Activated T-helper 1 cell treated with anti-CD3 and anti-CD28 coated beads, Interleukin-12 subunit alpha, Interleukin-12 subunit beta, Interleukin-2, Interleukin-4 antibody, amounts not matched to agents 30 ng/mL and 10 ng/mL and 1 ng/mL, durations not matched to agents 14 hours and 24 hours and 36 hours (primary cell): ENCODE measurements at regions of chr4 and their contacts with region 1.

Region 1: DNA sequence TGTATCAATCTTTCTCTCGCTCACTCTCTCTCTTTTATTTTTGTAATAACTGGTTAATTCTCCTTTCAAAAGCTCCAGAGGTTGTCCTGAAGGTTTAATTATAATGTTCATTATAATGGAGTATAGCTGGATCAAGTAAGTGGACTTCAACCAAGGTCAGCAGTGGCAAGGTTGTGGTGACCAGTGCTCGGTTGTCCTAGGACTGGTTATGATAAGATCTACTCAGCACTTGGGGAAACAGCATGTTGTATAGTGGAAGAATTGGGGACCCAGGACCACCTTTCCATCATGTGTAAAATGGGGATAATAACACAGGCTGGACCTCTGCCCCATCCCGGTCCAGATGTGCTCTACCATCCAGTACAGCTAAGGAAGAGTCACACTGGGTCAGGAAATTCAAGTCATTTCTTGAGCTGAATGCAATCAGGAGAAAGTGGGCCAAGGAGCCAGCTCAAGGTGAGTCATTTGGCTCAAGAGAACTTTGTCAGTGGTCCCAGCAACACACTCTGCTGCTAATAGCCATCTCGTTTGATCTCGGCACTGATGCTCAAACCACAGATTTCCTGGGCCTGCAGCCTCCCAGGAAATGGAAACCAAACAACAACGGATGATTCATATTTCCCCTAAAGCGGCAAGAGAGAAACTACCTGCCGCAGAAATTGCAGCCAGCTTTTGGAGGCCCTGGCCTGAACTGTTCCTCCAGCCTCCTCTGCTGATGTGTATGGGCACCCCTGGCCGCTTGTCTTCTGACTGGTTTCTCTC is 123.6 kb upstream of the RBPJ start:
- DNase-seq: peak; percentile 77
- H3K4me3 Mint-ChIP-seq: peak overlapping the region; percentile 71
- H3K27ac Mint-ChIP-seq: peak overlapping the region; percentile 95
- H3K4me1 Mint-ChIP-seq: peaks cover 93% of the 10 kb centered on the region
- H3K27me3 Mint-ChIP-seq: no peaks in the 10 kb centered on the region

Region 2: DNA sequence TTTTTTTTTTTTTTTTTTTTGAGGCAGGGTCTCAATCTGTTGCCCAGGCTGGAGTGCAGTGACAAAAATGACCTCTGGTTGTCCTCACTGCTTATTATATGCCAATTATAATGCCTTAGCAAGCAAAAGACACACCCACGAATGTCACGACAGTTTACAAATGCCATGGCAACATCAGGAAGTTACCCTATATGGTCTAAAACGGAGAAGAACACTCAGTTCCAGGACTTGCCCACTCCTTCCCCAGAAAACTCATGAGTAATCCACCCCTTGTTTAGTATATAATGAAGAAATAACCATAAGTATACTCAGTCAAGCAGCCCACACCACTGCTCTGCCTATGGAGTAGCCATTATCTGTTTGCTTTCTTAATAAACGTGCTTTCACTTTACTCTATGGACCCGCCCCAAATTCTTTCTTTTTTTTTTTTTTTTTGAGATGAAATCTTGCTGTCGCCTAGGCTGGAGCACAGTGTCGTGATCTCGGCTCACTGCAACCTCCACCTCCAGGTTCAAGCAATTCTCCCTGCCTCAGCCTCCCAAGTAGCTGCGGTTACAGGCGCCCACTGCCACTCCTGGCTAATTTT is 177.0 kb before region 1 on chr4:
- intact Hi-C with region 1: loop called (anchors 2 kb)
- DNase-seq: no peak
- H3K4me3 Mint-ChIP-seq: no peak overlapping the region
- H3K27ac Mint-ChIP-seq: peak overlapping the region; percentile 18
- H3K4me1 Mint-ChIP-seq: peaks cover 21% of the 10 kb centered on the region
- H3K27me3 Mint-ChIP-seq: peaks cover 9% of the 10 kb centered on the region

Region 3: DNA sequence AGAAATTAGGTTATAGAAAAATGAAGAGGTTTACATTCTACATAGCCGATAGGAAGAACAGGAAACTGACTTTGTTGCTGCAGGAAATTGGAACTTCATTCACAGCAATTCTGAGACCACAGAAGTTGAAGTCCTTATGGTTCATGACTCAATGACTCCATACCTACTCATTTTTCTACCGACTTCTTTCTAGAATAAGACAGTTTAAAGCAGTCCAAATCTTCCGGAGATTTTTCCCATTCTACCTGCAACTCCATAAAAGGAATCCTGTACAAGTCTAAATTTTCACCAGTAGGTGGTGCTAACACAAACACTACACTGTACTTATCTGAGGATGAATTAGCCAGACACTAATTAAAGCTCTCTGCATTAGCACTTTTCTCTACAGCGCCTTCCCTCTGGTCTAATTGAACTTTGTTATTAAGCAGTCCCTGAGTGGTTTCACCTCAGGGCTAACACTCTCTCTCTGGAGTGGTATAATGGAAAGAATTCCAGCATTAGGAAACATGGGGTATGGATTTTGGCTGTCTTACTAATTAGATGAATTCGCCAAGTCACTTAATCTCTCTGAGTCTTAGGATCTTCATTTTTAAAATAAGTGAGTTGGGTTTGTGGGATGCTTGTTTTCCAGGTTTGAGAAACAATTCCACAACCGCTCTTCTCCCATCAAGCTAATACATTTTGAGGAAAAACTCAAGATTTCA is 115.3 kb before region 1 on chr4:
- intact Hi-C with region 1: loop called (anchors 1 kb)
- DNase-seq: no peak
- H3K4me3 Mint-ChIP-seq: peak overlapping the region; percentile 48
- H3K27ac Mint-ChIP-seq: peak overlapping the region; percentile 81
- H3K4me1 Mint-ChIP-seq: peaks cover 83% of the 10 kb centered on the region
- H3K27me3 Mint-ChIP-seq: no peaks in the 10 kb centered on the region

Region 4: GRCh38 chr4:26141911-26142638 is 55.1 kb before region 1 on chr4:
- intact Hi-C with region 1: loop called (anchors 1 kb)
- DNase-seq: no peak
- H3K4me3 Mint-ChIP-seq: peak overlapping the region; percentile 3
- H3K27ac Mint-ChIP-seq: peak overlapping the region; percentile 78
- H3K4me1 Mint-ChIP-seq: peaks cover 67% of the 10 kb centered on the region
- H3K27me3 Mint-ChIP-seq: no peaks in the 10 kb centered on the region

Region 5: DNA sequence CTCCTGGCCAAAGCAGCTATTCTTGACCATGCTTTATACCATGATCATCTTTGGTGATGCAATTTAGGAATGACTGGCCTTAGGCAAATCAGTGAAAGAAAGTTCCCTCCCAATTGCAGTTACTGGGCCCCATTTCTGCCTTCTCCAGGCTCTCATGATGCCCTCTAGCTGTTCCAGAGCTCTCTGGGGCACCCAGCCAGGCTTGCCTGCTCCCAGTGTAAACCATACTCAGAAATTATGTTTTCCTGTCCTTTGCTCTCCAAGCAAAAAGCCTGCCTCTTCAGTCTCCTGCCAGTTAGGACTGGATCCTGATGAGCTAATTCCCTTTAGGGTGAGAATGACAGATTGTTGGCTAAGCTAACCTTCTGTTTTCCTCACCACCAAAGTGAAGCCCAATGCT is 38.3 kb after region 1 on chr4:
- intact Hi-C with region 1: loop called (anchors 5 kb)
- DNase-seq: no peak
- H3K4me3 Mint-ChIP-seq: no peak overlapping the region
- H3K27ac Mint-ChIP-seq: no peak overlapping the region
- H3K4me1 Mint-ChIP-seq: peaks cover 21% of the 10 kb centered on the region
- H3K27me3 Mint-ChIP-seq: peaks cover 3% of the 10 kb centered on the region

Region 6: DNA sequence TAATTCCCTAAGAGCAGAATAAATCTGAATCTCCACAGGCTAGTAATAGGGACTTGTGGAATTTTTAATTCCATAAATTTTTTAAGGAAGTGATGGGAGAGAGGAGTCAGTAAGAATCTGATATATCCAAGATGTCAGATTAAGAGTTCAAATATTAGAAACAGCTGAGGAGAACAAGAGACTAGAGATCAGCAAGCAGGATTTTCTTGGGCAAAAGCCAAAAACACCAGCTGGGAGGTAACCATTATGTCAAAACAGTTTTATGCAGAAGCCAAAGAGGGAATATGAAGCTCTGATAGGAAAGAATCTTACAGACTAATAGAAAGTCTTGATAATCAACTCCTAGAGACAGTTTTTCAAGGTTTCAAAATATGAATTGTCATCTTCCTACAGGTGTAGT is 51.4 kb after region 1 on chr4:
- intact Hi-C with region 1: no loop called
- DNase-seq: no peak
- H3K4me3 Mint-ChIP-seq: no peak overlapping the region
- H3K27ac Mint-ChIP-seq: no peak overlapping the region
- H3K4me1 Mint-ChIP-seq: peaks cover 6% of the 10 kb centered on the region
- H3K27me3 Mint-ChIP-seq: peaks cover 2% of the 10 kb centered on the region

Region 7: GRCh38 chr4:26319467-26319948 is 122.3 kb after region 1 on chr4:
- intact Hi-C with region 1: loop called (anchors 1 kb)
- DNase-seq: peak; percentile 98
- H3K4me3 Mint-ChIP-seq: peak overlapping the region; percentile 94
- H3K27ac Mint-ChIP-seq: peak overlapping the region; percentile 100
- H3K4me1 Mint-ChIP-seq: peaks cover 33% of the 10 kb centered on the region
- H3K27me3 Mint-ChIP-seq: peaks cover 2% of the 10 kb centered on the region

Region 8: DNA sequence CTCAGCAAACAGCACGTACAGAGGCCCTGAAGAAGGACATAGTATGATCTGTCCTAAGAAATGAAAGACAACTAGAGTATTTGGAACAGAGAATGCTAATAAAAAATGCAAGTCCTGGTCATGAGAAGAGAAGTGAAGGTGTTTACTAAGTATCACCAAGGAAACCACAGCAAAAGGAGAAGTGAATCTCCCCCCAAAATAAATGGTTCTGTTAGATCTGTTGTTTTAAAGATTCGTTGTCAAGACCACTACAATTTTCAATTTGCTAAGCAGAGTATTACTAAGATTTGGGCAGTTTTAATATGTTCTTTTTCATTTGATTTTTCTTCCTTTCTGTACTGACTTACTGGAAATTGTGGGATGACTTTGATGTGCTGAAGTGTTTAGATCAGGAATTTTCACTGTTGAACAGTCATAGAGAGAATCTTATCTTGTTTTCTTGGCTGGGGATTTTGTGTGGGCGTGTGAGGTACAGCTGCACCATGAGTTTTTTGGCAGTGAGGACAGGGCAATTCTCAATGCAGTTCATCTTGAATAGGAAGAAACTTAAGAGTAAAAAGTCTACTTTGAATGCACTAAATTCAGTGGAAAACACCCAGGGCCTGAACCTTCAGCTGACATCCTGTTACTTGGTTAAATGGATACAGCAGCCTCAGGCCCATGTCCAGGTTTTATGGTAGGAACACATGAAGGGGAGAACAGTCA is 795.6 kb after region 1 on chr4:
- intact Hi-C with region 1: loop called (anchors 10 kb)
- DNase-seq: no peak
- H3K4me3 Mint-ChIP-seq: no peak overlapping the region
- H3K27ac Mint-ChIP-seq: no peak overlapping the region
- H3K4me1 Mint-ChIP-seq: peaks cover 24% of the 10 kb centered on the region
- H3K27me3 Mint-ChIP-seq: no peaks in the 10 kb centered on the region